ACHN (cell line): ENCODE measurements at regions of chr2 and their contacts with region 1.

Region 1: DNA sequence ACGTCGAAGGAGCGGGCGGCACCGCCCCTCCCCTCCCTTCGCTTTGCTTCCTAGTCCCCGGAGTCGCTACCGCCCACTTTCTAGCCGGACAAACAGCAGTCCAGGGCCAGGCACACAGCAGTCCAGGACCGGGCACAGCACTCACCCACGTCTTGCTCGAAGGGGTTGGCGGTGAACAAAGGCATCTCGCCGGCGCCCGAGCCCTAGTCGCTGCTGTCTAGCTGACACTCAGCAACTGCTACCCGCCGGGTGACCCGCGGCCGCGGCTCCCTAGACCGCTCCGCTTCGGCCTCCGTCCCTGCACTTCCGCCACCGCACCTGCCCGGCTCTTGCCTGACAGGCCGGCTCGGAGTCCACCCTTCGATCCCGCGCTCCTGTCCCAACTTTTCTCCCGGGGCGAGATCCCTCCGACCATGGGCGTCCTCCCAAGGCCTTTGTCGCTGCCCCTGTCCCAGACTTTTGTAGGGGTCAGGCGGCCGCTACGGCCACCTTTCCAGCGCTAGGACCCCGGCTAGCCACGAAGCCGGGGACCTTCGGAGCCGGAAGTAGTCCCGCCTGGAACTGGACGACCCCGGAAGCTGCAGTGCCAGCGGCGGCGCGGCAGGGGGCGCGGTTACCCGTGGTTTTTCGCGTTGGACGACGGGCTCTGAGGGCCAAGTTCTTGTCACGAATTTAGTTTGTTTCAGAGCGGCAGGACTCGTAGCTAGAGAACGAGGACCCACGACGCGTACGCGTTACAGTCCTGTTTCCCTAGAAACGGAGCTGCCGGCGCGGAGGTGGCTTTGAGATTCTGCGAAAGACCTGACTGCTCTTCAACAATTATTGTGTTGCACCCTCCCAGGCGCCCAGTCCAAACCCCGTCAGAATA is at the start of gene STAM2:
- DNase-seq: peak; percentile 92

Region 2: GRCh38 chr2:152611458-152612231 is 436.0 kb after region 1 on chr2:
- in situ Hi-C with region 1: loop called (anchors 25 kb)
- DNase-seq: peak; percentile 55